Left cardiac atrium (tissue), 4 donors: ENCODE measurements at regions of chr13 and their contacts with region 1.

Region 1: GRCh38 chr13:53782488-53782961 is 753.9 kb downstream of the OLFM4 start:
- DNase-seq: no peak
- ATAC-seq: peak in 1 of 2 donors; percentile 72

Region 2: DNA sequence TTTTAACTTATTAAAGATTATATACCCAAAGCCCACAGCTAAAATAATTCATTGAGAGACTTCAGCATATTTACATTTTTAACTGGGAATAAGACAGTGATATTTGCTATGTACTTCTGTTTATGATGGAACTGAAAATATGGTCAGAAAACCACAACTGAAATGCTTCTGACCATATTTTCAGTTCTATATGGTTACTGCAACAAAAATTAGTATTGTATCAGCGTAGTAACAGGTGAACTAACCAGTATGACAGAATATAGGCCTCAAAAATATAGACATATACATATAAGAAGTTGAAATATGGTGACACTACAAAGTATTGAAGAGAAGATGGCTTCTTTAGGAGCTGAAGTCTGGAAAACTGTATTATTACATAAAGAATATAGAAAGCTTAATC is 103.5 kb after region 1 on chr13:
- intact Hi-C with region 1: no loop called
- DNase-seq: no peak
- ATAC-seq: no peak

Region 3: GRCh38 chr13:54536112-54536511 is 753.6 kb after region 1 on chr13:
- intact Hi-C with region 1: loop called in 1 of 2 experiments (anchors 5 kb)
- DNase-seq: no peak
- ATAC-seq: no peak